Activated T-helper 1 cell treated with anti-CD3 and anti-CD28 coated beads, Interleukin-12 subunit alpha, Interleukin-12 subunit beta, Interleukin-2, Interleukin-4 antibody, amounts not matched to agents 30 ng/mL and 10 ng/mL and 1 ng/mL, durations not matched to agents 14 hours and 24 hours and 36 hours (primary cell): ENCODE measurements at regions of chr1 and their contacts with region 1.

Region 1: GRCh38 chr1:227734856-227735538 is at the starts of genes JMJD4 and SNAP47:
- DNase-seq: peak; percentile 93
- H3K4me3 Mint-ChIP-seq: peak within 1 kb of the TSS; percentile 98
- H3K27ac Mint-ChIP-seq: peak within 1 kb of the TSS; percentile 97
- H3K4me1 Mint-ChIP-seq: peaks cover 25% of the 10 kb centered on the region
- H3K27me3 Mint-ChIP-seq: no peaks in the 10 kb centered on the region
- total RNA-seq, gene JMJD4: 33.9 and 37.5 TPM in 2 replicates
- total RNA-seq, gene SNAP47: 32.2 and 33.7 TPM in 2 replicates

Region 2: GRCh38 chr1:227542143-227543120 is 192.6 kb before region 1 on chr1:
- intact Hi-C with region 1: loop called (anchors 2 kb)
- DNase-seq: peak; percentile 87
- H3K4me3 Mint-ChIP-seq: peak overlapping the region; percentile 56
- H3K27ac Mint-ChIP-seq: peak overlapping the region; percentile 55
- H3K4me1 Mint-ChIP-seq: no peaks in the 10 kb centered on the region
- H3K27me3 Mint-ChIP-seq: no peaks in the 10 kb centered on the region

Region 3: GRCh38 chr1:227563324-227564201 is 171.4 kb before region 1 on chr1 and contains the start of gene ZNF678:
- intact Hi-C with region 1: loop called (anchors 1 kb)
- DNase-seq: peak; percentile 76
- H3K4me3 Mint-ChIP-seq: peak within 1 kb of the TSS; percentile 87
- H3K27ac Mint-ChIP-seq: peak within 1 kb of the TSS; percentile 88
- H3K4me1 Mint-ChIP-seq: peaks cover 22% of the 10 kb centered on the region
- H3K27me3 Mint-ChIP-seq: peaks cover 30% of the 10 kb centered on the region
- total RNA-seq, gene ZNF678: 4.2 and 5.0 TPM in 2 replicates

Region 4: DNA sequence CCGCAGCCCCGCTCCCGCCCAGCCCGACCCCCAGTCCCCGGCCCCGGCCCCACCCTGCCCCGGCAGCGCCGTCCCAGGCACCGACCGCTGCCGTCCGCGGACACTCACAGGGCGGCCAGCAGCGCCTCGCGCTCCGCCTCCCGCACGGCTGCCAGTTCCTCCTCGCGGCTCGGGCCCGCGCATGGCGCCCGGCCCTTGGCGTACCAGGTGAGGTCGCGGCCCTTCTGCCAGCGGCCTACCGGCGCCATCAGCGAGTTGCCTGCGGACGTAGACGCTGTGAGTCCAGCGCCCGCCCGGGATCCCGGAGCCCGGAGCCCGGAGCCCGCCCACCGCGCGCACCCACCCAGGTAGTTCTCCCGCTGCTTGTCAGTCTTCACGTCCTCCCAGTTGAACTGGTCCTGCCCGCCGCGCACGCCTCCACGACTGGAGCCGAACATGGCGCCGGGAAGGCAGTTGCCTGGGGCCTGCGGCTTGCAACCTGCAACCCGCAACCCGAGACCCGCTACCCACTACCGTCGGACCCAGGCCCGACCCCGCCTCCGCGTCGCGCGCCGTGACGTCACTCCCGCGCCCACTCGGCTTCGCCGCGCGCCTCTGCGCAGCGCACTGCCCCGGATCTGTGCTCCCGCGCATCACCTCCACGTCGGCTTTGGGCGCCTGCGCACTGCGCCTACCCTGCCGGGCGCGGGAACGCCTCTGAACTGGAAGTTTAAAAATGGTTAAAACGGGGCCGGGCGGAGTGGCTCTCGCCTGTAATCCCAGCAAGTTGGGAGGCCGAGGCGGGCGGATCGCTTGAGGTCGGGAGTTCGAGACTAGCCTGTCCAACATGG is 368.0 kb after region 1 on chr1 and contains the start of gene C1orf35:
- intact Hi-C with region 1: loop called (anchors 2 kb)
- DNase-seq: peak; percentile 96
- H3K4me3 Mint-ChIP-seq: peak within 1 kb of the TSS; percentile 92
- H3K27ac Mint-ChIP-seq: peak within 1 kb of the TSS; percentile 93
- H3K4me1 Mint-ChIP-seq: peaks cover 25% of the 10 kb centered on the region
- H3K27me3 Mint-ChIP-seq: no peaks in the 10 kb centered on the region
- total RNA-seq, gene C1orf35: 27.7 and 30.7 TPM in 2 replicates